Activated CD4-positive, alpha-beta T cell treated with anti-CD3 and anti-CD28 coated beads, Interleukin-2, amount 10 ng/mL, durations not matched to agents 24 days and 14 days (primary cell): ENCODE measurements at regions of chrX and their contacts with region 1.

Region 1: DNA sequence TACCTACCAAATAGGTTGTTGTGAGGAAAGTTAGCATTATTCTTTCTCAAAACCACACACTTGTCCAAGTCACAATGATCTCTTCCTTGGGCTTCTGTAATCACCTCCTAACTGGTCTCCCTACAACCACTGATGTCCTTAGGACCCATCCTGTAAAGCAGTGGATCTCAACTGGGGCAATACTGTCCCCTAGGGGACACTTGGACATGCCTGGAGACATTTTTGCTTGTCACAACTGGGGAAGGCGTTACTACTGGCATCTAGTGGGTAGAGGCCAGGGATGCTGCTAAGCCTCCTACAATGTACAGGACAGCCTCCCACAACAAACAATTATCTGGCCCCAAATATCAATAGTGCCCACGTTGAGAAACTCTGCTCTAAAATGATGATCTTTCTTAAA is 118.7 kb upstream of the AP1S2 start:
- DNase-seq: peak; percentile 58
- H3K4me3 Mint-ChIP-seq: no peak overlapping the region
- H3K27ac Mint-ChIP-seq: no peak overlapping the region
- H3K4me1 Mint-ChIP-seq: peaks cover 2% of the 10 kb centered on the region
- H3K27me3 Mint-ChIP-seq: peaks cover 1% of the 10 kb centered on the region

Region 2: GRCh38 chrX:15686818-15687685 is 286.2 kb before region 1 on chrX:
- intact Hi-C with region 1: loop called (anchors 10 kb)
- DNase-seq: peak; percentile 87
- H3K4me3 Mint-ChIP-seq: no peak overlapping the region
- H3K27ac Mint-ChIP-seq: no peak overlapping the region
- H3K4me1 Mint-ChIP-seq: peaks cover 8% of the 10 kb centered on the region
- H3K27me3 Mint-ChIP-seq: no peaks in the 10 kb centered on the region

Region 3: GRCh38 chrX:15911734-15912550 is 61.4 kb before region 1 on chrX:
- intact Hi-C with region 1: no loop called
- DNase-seq: no peak
- H3K4me3 Mint-ChIP-seq: no peak overlapping the region
- H3K27ac Mint-ChIP-seq: no peak overlapping the region
- H3K4me1 Mint-ChIP-seq: no peaks in the 10 kb centered on the region
- H3K27me3 Mint-ChIP-seq: peaks cover 4% of the 10 kb centered on the region

Region 4: DNA sequence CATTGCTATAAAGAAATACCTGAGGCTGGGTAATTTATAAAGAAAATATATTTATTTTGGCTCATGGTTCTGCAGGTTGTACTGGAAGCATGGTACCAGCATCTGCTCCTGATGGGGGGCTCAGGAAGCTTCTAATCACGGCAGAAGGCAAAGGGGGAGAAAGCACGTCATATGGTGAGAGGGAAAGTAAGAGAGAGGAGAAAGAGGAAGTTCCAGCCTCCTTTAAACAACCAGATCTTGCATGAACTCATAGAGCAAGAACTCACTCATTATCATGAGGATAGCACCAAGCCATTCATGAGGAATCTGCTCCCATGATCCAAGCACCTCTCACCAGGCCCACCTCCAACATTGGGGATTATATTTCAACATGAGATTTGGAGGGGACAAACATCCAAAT is 25.1 kb after region 1 on chrX:
- intact Hi-C with region 1: no loop called
- DNase-seq: no peak
- H3K4me3 Mint-ChIP-seq: no peak overlapping the region
- H3K27ac Mint-ChIP-seq: no peak overlapping the region
- H3K4me1 Mint-ChIP-seq: no peaks in the 10 kb centered on the region
- H3K27me3 Mint-ChIP-seq: no peaks in the 10 kb centered on the region

Region 5: GRCh38 chrX:16185725-16186136 is 212.4 kb after region 1 on chrX:
- intact Hi-C with region 1: no loop called
- DNase-seq: no peak
- H3K4me3 Mint-ChIP-seq: no peak overlapping the region
- H3K27ac Mint-ChIP-seq: no peak overlapping the region
- H3K4me1 Mint-ChIP-seq: peaks cover 3% of the 10 kb centered on the region
- H3K27me3 Mint-ChIP-seq: no peaks in the 10 kb centered on the region